ENCODE measurements at regions of chr2 and their contacts with region 1.

Region 1: DNA sequence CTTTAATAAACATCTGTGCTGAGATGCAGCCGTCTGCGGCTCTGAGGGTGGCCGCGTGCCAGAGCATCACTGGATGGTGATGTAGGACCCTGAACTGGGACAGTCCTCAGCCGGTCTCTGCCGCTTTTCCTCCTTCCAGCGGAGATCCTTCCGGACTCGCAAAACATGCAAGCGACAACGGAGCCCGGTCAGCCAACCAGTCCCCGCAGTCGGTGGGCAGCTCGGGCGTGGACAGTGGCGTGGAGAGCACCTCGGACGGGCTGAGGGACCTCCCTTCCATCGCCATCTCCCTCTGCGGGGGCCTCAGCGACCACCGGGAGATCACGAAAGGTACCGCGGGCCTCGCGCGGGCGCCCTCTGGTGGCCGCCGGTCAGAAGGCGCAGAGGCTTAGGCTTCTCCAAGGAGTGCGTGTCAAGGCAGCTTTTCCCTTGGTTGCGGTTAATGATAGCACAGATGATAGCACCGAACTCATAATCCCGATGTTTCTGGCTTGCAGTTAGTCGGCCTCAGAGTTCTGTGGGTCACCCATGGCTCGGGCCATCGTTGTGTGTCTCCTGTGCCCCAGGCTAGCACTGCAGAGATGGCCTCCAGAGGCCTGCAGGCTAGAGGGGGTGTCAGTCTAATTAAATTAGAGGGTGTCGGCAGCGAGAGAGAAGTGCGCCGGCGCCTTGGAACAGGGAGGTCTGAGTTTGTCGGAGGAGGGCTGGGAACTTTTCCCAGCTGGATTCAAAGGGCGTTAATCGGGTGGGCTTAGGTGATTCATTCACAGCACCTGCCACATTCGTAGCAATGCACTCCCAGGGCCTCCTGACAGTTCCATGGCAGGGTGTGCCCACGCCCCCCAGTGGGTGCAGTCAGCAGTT is 38.5 kb downstream of the LPIN1 start:
- DNase-seq: no peak
- H3K4me3 ChIP-seq: peak overlapping the region in 2 of 3 donors; percentile 36 to 45
- H3K27ac ChIP-seq: no peak overlapping the region
- H3K4me1 ChIP-seq: no peaks in the 10 kb centered on the region
- H3K27me3 ChIP-seq: no peaks in the 10 kb centered on the region
- CTCF ChIP-seq: peak; percentile 62 to 78 (median 70)
- POLR2A ChIP-seq: no peak

Region 2: DNA sequence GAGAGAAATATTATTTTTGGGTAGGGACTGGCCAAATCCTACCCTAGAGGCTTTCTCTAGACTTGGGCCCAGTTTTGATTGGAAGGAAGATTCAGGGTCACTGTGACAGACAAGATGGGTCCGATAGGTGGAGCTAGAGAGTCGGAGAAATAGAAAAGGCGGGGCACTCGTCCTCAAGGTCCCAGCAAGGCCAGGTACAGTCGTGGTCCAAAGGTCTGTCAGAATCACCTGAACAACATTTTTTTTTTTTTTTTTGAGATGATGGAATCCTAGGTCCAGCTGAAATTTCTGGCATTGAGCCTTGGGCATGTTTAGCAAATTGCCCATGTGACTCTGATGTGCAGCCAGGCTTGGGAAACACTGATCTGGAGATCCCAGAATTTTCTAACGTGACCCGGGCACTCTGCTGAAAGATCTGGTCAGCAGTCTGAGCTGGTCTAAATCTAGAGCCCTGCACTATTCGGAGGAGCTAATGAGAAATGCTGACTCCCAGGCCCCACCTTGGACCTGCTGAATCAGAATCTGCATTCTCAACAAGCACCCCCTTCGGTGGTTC is 91.9 kb before region 1 on chr2:
- intact Hi-C with region 1: loop called (anchors 10 kb)
- DNase-seq: peak in 1 of 2 donors; percentile 62
- H3K4me3 ChIP-seq: no peak overlapping the region
- H3K27ac ChIP-seq: no peak overlapping the region
- H3K4me1 ChIP-seq: peaks cover 0 to 11% of the 10 kb centered on the region in 2 donors
- H3K27me3 ChIP-seq: no peaks in the 10 kb centered on the region
- CTCF ChIP-seq: peak; percentile 70 to 78 (median 71)
- POLR2A ChIP-seq: no peak

Measured in breast epithelium (tissue), 4 donors.